Calu3 (cell line): ENCODE measurements at regions of chr17 and their contacts with region 1.

Region 1: DNA sequence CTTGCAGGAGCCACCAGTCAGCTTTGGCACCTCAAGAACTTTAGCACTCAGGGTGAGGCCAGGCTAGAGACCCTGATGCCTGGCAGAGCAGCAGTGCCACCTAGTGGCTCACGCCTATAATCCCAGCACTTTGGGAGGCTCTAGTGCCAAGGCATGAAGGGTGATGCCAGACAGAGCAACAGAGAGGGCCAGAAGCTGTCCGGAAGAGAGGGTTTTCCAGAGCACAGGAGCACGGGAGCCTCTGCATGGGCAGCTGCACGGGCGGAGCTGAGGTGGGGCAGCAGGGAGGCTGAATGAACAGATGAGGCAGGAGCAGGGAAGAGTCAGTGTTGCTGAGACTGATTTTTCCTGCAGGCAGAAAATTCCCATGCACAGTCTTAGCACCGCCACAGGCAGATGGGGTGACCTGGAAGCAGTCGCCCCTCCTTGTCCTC is 38.9 kb downstream of the MYH3 start:
- DNase-seq: peak; percentile 63
- H3K4me3 Mint-ChIP-seq: no peak overlapping the region
- H3K27ac Mint-ChIP-seq: peak overlapping the region; percentile 50
- H3K4me1 Mint-ChIP-seq: peaks cover 8% of the 10 kb centered on the region
- H3K27me3 Mint-ChIP-seq: peaks cover 11% of the 10 kb centered on the region
- CTCF ChIP-seq: no peak

Region 2: GRCh38 chr17:9924735-9925191 is 693.5 kb before region 1 on chr17:
- CTCF ChIA-PET with region 1: interaction called, 5 read pairs
- intact Hi-C with region 1: loop called (anchors 10 kb)
- DNase-seq: peak; percentile 32
- H3K4me3 Mint-ChIP-seq: no peak overlapping the region
- H3K27ac Mint-ChIP-seq: no peak overlapping the region
- H3K4me1 Mint-ChIP-seq: no peaks in the 10 kb centered on the region
- H3K27me3 Mint-ChIP-seq: no peaks in the 10 kb centered on the region
- CTCF ChIP-seq: no peak

Region 3: DNA sequence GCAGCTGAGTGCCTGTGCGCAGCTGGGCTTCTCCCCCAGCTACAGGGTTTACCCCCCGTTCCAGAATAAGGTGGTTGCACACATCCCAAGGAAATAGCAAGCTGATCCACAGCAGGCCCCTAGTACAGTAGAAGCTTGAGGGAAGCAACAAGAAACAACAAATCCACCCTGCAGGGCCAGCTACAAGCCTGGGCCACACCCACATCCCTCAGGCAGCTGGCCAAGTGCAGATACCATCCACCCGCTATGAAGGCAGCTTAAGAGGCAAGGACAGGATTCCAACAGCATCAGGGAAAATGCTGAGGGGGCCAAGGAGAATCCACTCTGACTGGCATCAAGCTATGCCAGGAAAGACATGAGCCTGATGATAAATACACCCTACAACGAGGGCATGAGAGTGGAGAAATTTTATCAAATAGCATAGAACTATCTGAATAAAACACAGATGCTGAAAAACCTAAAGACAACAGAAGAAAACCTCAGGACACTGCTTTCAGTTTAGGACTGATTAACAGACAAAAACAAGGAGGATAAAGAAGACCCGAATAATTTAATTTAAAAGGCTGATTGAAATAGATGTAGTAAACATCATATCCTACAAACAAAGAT is 646.1 kb before region 1 on chr17:
- CTCF ChIA-PET with region 1: no interaction called
- intact Hi-C with region 1: loop called (anchors 5 kb)
- DNase-seq: peak; percentile 37
- H3K4me3 Mint-ChIP-seq: no peak overlapping the region
- H3K27ac Mint-ChIP-seq: no peak overlapping the region
- H3K4me1 Mint-ChIP-seq: no peaks in the 10 kb centered on the region
- H3K27me3 Mint-ChIP-seq: peaks cover 50% of the 10 kb centered on the region
- CTCF ChIP-seq: no peak

Region 4: GRCh38 chr17:10295728-10296343 is 322.4 kb before region 1 on chr17:
- CTCF ChIA-PET with region 1: interaction called, 3 read pairs
- intact Hi-C with region 1: loop called (anchors 1 kb)
- DNase-seq: peak; percentile 28
- H3K4me3 Mint-ChIP-seq: no peak overlapping the region
- H3K27ac Mint-ChIP-seq: no peak overlapping the region
- H3K4me1 Mint-ChIP-seq: no peaks in the 10 kb centered on the region
- H3K27me3 Mint-ChIP-seq: no peaks in the 10 kb centered on the region
- CTCF ChIP-seq: no peak

Region 5: DNA sequence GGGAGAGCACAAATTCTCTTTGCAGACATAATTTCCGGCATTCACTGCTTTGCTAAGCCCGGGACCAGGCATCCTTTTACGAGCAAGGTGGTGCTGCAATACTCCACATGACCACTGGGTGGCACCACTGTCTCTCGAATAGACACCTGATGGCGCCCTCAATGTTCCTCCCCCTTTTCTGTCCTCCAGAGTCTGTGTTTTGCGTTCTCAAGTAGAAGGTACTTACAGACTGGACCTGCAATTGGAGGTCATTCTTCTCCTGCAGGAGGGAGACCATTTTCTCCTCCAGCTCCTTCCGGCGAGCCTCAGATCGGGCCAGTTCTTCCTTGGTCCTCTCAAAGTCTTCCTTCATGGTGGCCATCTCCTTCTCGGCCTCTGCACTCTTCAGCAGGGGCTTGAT is 290.6 kb before region 1 on chr17:
- CTCF ChIA-PET with region 1: no interaction called
- intact Hi-C with region 1: loop called (anchors 2 kb)
- DNase-seq: peak; percentile 67
- H3K4me3 Mint-ChIP-seq: no peak overlapping the region
- H3K27ac Mint-ChIP-seq: no peak overlapping the region
- H3K4me1 Mint-ChIP-seq: no peaks in the 10 kb centered on the region
- H3K27me3 Mint-ChIP-seq: no peaks in the 10 kb centered on the region
- CTCF ChIP-seq: peak; percentile 72

Region 6: DNA sequence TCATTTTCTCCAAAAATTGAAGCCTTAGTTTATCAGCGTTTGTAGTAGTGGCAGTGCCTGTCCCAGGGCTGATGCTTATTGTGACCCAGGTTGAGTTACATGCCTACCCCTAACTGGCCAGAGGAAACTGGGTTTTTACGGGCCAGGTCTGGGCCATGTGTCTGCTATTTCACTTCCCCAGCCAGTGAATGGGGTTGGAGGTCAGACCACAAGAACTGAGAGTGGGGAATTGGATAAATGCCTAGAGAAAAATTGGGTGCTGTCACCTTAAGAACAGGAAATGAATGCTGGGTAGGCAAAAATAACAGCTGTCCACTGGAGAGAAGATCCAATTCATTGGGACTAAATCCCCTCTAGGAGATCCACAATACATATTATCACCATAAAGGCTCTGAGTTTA is 84.4 kb after region 1 on chr17:
- CTCF ChIA-PET with region 1: no interaction called
- intact Hi-C with region 1: no loop called
- DNase-seq: no peak
- H3K4me3 Mint-ChIP-seq: no peak overlapping the region
- H3K27ac Mint-ChIP-seq: no peak overlapping the region
- H3K4me1 Mint-ChIP-seq: no peaks in the 10 kb centered on the region
- H3K27me3 Mint-ChIP-seq: no peaks in the 10 kb centered on the region
- CTCF ChIP-seq: no peak